ENCODE measurements at regions of chr10 and their contacts with region 1.

Region 1: DNA sequence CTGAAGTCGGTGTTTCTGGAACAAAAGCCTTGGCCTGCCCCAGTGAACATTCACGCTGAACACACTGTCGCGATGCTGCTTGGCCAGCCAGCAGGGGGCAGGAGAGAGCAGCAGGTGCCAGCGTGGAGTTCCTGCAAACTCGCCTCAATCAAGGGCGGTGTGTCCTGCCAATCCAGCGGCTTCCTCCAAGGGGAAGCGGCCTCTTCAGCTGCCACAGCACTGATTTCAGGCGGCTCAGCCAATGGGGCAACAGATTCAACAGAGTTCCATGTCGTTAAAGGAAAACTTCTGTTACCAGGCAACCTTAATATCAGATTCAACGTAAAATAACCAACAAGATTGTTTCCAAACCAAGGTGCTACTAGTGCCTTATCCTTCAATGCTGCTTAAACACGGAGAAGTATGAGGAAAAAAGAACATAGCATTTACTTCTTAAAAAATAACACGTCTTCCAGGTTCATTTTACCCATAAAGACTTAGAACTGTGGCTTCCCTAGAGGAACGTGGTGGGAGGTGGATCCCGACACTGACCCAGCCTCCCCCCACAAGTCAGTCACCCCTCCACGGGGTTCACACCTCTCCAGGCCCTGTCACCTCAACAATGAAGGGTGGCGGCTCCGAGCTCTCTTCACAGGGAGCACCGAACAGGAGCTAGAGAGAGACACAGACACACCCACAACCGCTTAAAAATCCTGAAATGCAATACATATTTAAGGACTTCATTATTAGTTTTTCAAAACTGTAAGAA is 178.2 kb downstream of the DIP2C start:
- DNase-seq: peak; percentile 67
- ATAC-seq: peak; percentile 94
- H3K4me3 ChIP-seq: peak overlapping the region; percentile 13 to 29
- H3K27ac ChIP-seq: peak overlapping the region; percentile 65; the same call in 1 of the 2 replicates
- H3K4me1 ChIP-seq: peaks cover 14% of the 10 kb centered on the region
- H3K27me3 ChIP-seq: no peaks in the 10 kb centered on the region
- CTCF ChIP-seq: peak; percentile 93

Region 2: GRCh38 chr10:557792-558328 is 46.6 kb after region 1 on chr10:
- CTCF ChIA-PET with region 1: no interaction called
- POLR2A ChIA-PET with region 1: no interaction called
- in situ Hi-C with region 1: no loop called
- intact Hi-C with region 1: no loop called
- DNase-seq: no peak
- ATAC-seq: no peak
- H3K4me3 ChIP-seq: no peak overlapping the region
- H3K27ac ChIP-seq: no peak overlapping the region
- H3K4me1 ChIP-seq: peaks cover 7% of the 10 kb centered on the region
- H3K27me3 ChIP-seq: no peaks in the 10 kb centered on the region
- CTCF ChIP-seq: no peak

Region 3: GRCh38 chr10:659688-660141 is 148.4 kb after region 1 on chr10:
- CTCF ChIA-PET with region 1: interaction called, 3 read pairs
- POLR2A ChIA-PET with region 1: no interaction called
- in situ Hi-C with region 1: no loop called
- intact Hi-C with region 1: loop called (anchors 10 kb)
- DNase-seq: no peak
- ATAC-seq: no peak
- H3K4me3 ChIP-seq: no peak overlapping the region
- H3K27ac ChIP-seq: no peak overlapping the region
- H3K4me1 ChIP-seq: peaks cover 3% of the 10 kb centered on the region; the same call in 1 of the 2 replicates
- H3K27me3 ChIP-seq: no peaks in the 10 kb centered on the region
- CTCF ChIP-seq: no peak

Region 4: DNA sequence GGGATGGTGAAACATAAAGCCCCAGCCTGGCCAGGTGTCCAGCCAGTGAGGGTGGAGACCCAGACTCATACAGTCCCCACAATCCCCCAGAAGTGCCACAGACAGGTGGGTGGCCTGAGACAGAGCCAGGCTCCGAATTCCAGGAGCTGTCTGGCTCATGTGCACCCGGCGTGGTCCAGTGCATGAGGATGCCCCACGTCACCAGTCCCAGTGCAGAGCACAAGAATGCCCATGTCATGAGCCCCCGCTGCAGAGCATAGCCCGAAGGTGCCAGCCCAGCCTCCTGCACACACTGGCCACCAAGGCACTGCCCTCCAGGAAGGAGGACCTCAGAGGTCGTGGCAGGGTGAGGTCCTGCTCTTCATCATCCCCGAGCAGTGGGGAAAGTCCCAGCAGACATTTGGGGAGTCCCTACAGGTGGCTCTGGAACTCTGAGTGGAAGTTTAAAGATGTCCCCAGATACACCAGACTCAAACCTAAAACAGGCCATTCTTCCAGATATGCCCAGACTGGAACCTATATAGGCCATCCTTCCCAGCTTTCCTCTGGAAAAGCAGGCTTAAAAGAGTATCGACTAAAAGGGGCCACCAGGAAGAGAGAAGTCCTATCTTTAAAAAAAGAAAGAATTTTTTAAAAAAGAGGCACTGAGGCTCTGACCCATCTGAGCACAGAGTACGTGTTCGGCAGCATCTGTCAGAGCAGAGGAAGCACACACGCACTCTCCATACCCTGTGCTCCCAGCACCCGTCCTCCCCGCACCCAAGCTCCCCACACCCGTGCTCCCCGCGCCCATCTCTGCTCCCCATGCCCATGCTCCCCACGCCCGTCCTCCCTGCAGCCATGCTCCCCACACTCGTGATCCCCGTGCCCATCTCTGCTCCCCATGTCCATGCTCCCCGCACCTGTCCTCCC is 166.7 kb after region 1 on chr10:
- CTCF ChIA-PET with region 1: interaction called, 10 read pairs
- POLR2A ChIA-PET with region 1: interaction called, 12 read pairs
- in situ Hi-C with region 1: no loop called
- intact Hi-C with region 1: no loop called
- DNase-seq: no peak
- ATAC-seq: peak; percentile 43; the same call in 1 of the 2 replicates
- H3K4me3 ChIP-seq: no peak overlapping the region
- H3K27ac ChIP-seq: no peak overlapping the region
- H3K4me1 ChIP-seq: peaks cover 6% of the 10 kb centered on the region
- H3K27me3 ChIP-seq: no peaks in the 10 kb centered on the region
- CTCF ChIP-seq: no peak

Region 5: DNA sequence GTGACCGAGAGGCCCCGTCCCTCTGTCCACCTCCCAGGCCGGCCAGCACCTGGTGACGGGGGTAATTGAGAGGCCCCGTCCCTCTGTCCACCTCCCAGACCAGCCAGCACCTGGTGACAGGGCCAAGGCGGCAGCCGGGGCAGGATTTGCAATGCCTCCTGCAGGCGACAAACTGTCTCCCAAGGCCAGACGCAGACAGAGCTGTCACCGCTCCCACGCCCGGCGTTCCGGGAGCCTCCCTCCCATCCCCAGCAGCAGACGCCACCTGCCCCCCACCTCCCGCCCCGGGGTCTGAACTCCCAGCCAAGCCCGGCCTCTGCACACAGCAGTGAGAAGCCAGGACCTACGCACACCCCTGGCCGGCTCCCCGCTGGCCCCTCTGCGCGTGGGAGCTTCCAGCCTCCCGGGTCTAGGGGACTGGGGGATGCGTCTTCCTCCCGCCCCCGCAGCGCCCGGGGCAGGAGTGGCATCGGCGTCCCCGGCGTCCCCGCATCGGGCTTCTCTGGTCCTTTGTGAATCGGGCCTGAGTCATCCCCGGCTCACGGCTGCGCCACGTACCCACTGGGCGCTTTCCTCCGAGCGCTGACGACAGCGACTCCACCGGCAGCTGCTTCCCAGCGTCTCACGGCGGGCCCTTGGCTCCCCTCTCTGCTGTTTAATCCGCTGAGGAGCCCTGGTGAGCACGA is 273.3 kb after region 1 on chr10:
- CTCF ChIA-PET with region 1: interaction called, 5 read pairs
- POLR2A ChIA-PET with region 1: no interaction called
- in situ Hi-C with region 1: no loop called
- intact Hi-C with region 1: loop called (anchors 5 kb)
- DNase-seq: no peak
- ATAC-seq: peak; percentile 79
- H3K4me3 ChIP-seq: peak overlapping the region; percentile 31 to 43
- H3K27ac ChIP-seq: no peak overlapping the region
- H3K4me1 ChIP-seq: no peaks in the 10 kb centered on the region; the same call in 1 of the 2 replicates
- H3K27me3 ChIP-seq: no peaks in the 10 kb centered on the region
- CTCF ChIP-seq: no peak; the same call in 1 of the 2 replicates